H1 (cell line): ENCODE measurements at regions of chr7 and their contacts with region 1.

Region 1: GRCh38 chr7:37916673-37917660 is at the start of gene SFRP4:
- DNase-seq: peak in 1 of 2 experiments; percentile 81
- H3K4me3 ChIP-seq: peak within 1 kb of the TSS; percentile 30 to 66 (median 56)
- H3K27ac ChIP-seq: no peak within 1 kb of the TSS
- H3K4me1 ChIP-seq: peaks cover 0 to 10% (median 5%) of the 10 kb centered on the region in 4 experiments; a peak in 6 of 7 replicates
- H3K27me3 ChIP-seq: peaks cover 8 to 44% (median 29%) of the 10 kb centered on the region in 4 experiments
- CTCF ChIP-seq: peak; percentile 54 to 74 (median 66)
- EP300 ChIP-seq: no peak
- POLR2A ChIP-seq: no peak
- RAD21 ChIP-seq: peak; percentile 56 to 68
- total RNA-seq, gene SFRP4: not detected in 2 replicates

Region 2: GRCh38 chr7:37656913-37657530 is 259.9 kb before region 1 on chr7:
- CTCF ChIA-PET with region 1: no interaction called
- POLR2A ChIA-PET with region 1: no interaction called
- DNase-seq: no peak
- H3K4me3 ChIP-seq: no peak overlapping the region
- H3K27ac ChIP-seq: no peak overlapping the region
- H3K4me1 ChIP-seq: no peaks in the 10 kb centered on the region
- H3K27me3 ChIP-seq: no peaks in the 10 kb centered on the region
- CTCF ChIP-seq: peak in 1 of 3 experiments; percentile 15; a peak in 1 of 4 replicates
- EP300 ChIP-seq: no peak
- POLR2A ChIP-seq: no peak
- RAD21 ChIP-seq: no peak; a peak in 1 of 4 replicates

Region 3: GRCh38 chr7:37786741-37787569 is 130.0 kb before region 1 on chr7:
- CTCF ChIA-PET with region 1: no interaction called
- POLR2A ChIA-PET with region 1: no interaction called
- DNase-seq: no peak
- H3K4me3 ChIP-seq: no peak overlapping the region
- H3K27ac ChIP-seq: no peak overlapping the region
- H3K4me1 ChIP-seq: peaks cover 0 to 5% (median 0%) of the 10 kb centered on the region in 4 experiments; a peak in 1 of 7 replicates
- H3K27me3 ChIP-seq: no peaks in the 10 kb centered on the region
- CTCF ChIP-seq: no peak
- EP300 ChIP-seq: no peak
- POLR2A ChIP-seq: no peak
- RAD21 ChIP-seq: no peak

Region 4: GRCh38 chr7:37901236-37901827 is 15.6 kb before region 1 on chr7:
- CTCF ChIA-PET with region 1: interaction called, 52 read pairs
- POLR2A ChIA-PET with region 1: interaction called, 3 read pairs
- DNase-seq: no peak
- H3K4me3 ChIP-seq: no peak overlapping the region
- H3K27ac ChIP-seq: no peak overlapping the region
- H3K4me1 ChIP-seq: no peaks in the 10 kb centered on the region
- H3K27me3 ChIP-seq: no peaks in the 10 kb centered on the region
- CTCF ChIP-seq: peak in 2 of 3 experiments; percentile 44 to 55; a peak in 2 of 4 replicates
- EP300 ChIP-seq: no peak
- POLR2A ChIP-seq: no peak
- RAD21 ChIP-seq: peak; percentile 74 to 76

Region 5: GRCh38 chr7:37947138-37947940 is 30.4 kb after region 1 on chr7:
- CTCF ChIA-PET with region 1: interaction called, 12 read pairs
- POLR2A ChIA-PET with region 1: no interaction called
- DNase-seq: no peak
- H3K4me3 ChIP-seq: no peak overlapping the region
- H3K27ac ChIP-seq: no peak overlapping the region
- H3K4me1 ChIP-seq: peaks cover 0 to 6% (median 4%) of the 10 kb centered on the region in 4 experiments; a peak in 3 of 7 replicates
- H3K27me3 ChIP-seq: no peaks in the 10 kb centered on the region
- CTCF ChIP-seq: no peak
- EP300 ChIP-seq: no peak
- POLR2A ChIP-seq: no peak
- RAD21 ChIP-seq: no peak

Region 6: GRCh38 chr7:37987732-37988131 is 70.8 kb after region 1 on chr7:
- CTCF ChIA-PET with region 1: interaction called, 21 read pairs
- POLR2A ChIA-PET with region 1: no interaction called
- DNase-seq: no peak
- H3K4me3 ChIP-seq: no peak overlapping the region
- H3K27ac ChIP-seq: no peak overlapping the region
- H3K4me1 ChIP-seq: no peaks in the 10 kb centered on the region
- H3K27me3 ChIP-seq: peaks cover 0 to 1% (median 0%) of the 10 kb centered on the region in 4 experiments; a peak in 1 of 7 replicates
- CTCF ChIP-seq: no peak
- EP300 ChIP-seq: no peak
- POLR2A ChIP-seq: no peak
- RAD21 ChIP-seq: no peak

Region 7: DNA sequence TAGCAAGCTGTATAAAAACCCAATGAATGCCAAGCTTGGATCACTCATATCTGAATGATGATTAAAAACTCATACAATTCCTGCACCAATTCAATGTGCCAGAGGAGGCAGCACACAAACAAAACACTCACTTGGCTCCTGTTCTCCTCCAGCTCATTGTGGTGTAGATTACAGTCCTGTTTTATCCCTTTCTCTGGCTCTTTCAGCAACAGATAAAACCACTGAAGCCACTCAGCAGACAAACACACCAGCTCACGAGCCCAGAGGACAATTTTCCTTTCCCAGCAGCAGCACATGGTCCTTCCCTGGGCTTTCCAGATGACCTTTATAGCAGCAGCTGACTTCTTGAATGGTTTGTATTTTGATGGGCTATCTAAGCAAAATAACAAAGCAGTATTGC is 153.8 kb after region 1 on chr7:
- CTCF ChIA-PET with region 1: interaction called, 17 read pairs
- POLR2A ChIA-PET with region 1: interaction called, 3 read pairs
- DNase-seq: no peak
- H3K4me3 ChIP-seq: peak overlapping the region in 1 of 4 experiments; percentile 19; a peak in 1 of 8 replicates
- H3K27ac ChIP-seq: no peak overlapping the region
- H3K4me1 ChIP-seq: peaks cover 0 to 2% (median under 1%) of the 10 kb centered on the region in 4 experiments; a peak in 3 of 7 replicates
- H3K27me3 ChIP-seq: peaks cover 0 to 1% (median 0%) of the 10 kb centered on the region in 4 experiments; a peak in 1 of 7 replicates
- CTCF ChIP-seq: peak in 2 of 3 experiments; percentile 49 to 81; a peak in 3 of 4 replicates
- EP300 ChIP-seq: no peak
- POLR2A ChIP-seq: no peak
- RAD21 ChIP-seq: peak in 1 of 2 experiments; percentile 39; a peak in 2 of 4 replicates

Region 8: DNA sequence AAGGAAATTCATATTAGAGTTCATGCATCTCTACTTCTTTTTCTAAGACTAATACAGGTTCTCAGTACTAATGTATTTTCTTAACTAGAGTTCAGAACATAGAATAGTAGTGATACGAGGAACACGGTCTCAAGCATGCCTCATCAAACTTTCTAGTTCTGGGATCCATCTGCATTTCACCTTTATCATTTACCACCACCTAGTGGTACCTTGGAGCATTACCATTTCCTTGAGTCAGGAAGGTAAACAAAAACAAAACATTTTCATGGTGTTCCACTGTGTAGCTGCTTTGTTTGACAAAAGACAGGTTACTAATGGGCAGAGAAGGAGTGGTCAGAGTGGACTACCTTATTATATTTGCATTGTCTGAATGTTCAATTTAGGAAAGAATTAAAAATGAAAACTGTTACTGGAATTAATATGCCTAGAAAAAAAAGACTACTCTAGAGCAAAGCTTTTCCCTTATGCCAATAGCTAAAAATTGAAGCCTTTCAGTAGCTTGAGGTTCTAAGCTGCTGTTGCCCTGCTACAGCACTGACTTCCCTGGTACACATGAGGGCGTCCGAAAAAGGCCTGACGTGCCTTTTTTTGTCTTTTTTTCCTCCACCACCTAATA is 305.6 kb after region 1 on chr7:
- CTCF ChIA-PET with region 1: interaction called, 10 read pairs
- POLR2A ChIA-PET with region 1: no interaction called
- DNase-seq: no peak
- H3K4me3 ChIP-seq: no peak overlapping the region
- H3K27ac ChIP-seq: no peak overlapping the region
- H3K4me1 ChIP-seq: no peaks in the 10 kb centered on the region
- H3K27me3 ChIP-seq: no peaks in the 10 kb centered on the region
- CTCF ChIP-seq: peak in 2 of 3 experiments; percentile 77 to 80; a peak in 3 of 4 replicates
- EP300 ChIP-seq: no peak
- POLR2A ChIP-seq: no peak
- RAD21 ChIP-seq: peak; percentile 87 to 88

Region 9: DNA sequence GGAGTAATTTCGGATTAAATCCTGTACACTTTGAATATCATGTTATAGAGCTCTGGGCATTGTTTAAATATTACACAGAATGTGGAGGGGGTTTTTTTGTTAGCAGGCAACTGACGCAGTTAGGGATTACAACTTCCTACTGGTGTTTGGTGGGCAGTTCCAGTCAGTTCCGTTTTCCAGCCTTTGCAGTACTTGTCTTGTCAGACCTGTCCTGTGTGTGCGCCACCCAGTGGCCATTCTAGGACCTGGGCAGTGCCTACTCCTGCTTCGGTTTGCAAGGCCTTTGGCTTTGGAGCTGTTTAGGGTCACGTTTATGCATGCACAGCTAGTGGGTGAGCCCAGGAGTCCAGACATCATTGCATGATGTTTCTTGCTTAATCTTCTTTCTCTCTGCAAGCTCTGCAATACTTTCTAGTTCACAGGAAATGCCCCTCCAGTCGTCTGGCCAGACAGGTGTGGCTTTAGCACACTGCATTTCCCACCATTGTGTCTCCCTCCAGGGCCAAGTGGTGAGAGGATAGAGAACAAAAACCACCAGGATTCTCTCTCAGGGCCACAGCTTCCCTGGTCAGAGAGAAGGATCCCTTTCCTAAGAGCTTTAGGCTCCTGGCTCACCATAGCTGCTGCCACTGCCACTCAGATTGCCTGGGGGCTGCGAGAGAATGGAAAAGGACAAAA is 453.0 kb after region 1 on chr7:
- CTCF ChIA-PET with region 1: interaction called, 19 read pairs
- POLR2A ChIA-PET with region 1: no interaction called
- DNase-seq: peak; percentile 85 to 93
- H3K4me3 ChIP-seq: no peak overlapping the region
- H3K27ac ChIP-seq: no peak overlapping the region
- H3K4me1 ChIP-seq: peaks cover 0 to 6% (median under 1%) of the 10 kb centered on the region in 4 experiments; a peak in 2 of 7 replicates
- H3K27me3 ChIP-seq: no peaks in the 10 kb centered on the region
- CTCF ChIP-seq: peak; percentile 93 to 100 (median 95)
- EP300 ChIP-seq: no peak
- POLR2A ChIP-seq: no peak
- RAD21 ChIP-seq: peak; percentile 28 to 43; a peak in 3 of 4 replicates